Posterior vena cava (tissue), 2 donors: ENCODE measurements at regions of chr3 and their contacts with region 1.

Region 1: GRCh38 chr3:186540221-186540834 is 3.9 kb downstream of the CRYGS start:
- DNase-seq: no peak

Region 2: DNA sequence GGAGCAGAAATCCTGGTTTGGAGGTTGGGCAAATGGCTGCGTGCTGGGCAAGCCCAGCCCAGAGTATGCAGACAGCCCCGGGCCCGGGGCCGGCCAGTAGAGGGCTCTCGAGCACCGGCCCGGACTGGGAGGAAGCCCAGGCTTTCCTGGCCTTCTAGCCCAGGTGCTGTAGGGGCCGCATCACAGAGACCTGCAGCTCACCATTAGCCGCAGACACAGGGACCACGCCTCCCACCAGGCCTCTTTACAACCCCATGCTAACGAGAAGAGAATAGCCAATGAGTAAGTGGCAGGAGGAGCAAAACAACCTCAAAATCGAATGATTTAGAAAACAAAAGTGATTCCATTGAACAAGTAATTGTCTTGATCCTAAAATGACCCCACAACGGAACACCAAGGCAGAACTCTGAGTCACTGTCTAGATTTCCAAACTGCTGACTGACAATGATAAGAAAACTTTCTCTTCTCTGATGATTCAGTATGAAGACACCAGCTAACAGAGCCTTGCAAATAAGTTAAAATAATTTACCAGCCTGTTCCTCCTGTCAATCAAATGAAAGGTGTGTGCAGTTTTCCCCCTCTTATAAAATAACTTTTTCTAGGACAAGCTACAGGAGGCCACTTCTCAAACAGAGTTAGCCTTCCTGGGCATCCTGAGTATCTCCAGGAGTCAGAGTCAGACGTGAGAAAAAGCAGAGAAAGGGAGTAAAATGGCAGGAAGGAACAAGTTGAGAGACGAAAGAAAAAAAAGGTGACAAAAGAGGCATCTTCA is 280.5 kb before region 1 on chr3:
- intact Hi-C with region 1: loop called (anchors 5 to 10 kb)
- DNase-seq: peak; percentile 91

Region 3: GRCh38 chr3:187922704-187923416 is 1382.5 kb after region 1 on chr3:
- intact Hi-C with region 1: no loop called
- DNase-seq: no peak